Vagina (tissue), 2 donors: ENCODE measurements at regions of chr4 and their contacts with region 1.

Region 1: GRCh38 chr4:157035471-157035870 is 40.5 kb upstream of the GLRB start:
- DNase-seq: no peak
- H3K4me3 ChIP-seq: no peak overlapping the region
- H3K27ac ChIP-seq: no peak overlapping the region
- H3K4me1 ChIP-seq: no peaks in the 10 kb centered on the region
- H3K27me3 ChIP-seq: no peaks in the 10 kb centered on the region
- CTCF ChIP-seq: no peak
- POLR2A ChIP-seq: no peak

Region 2: GRCh38 chr4:157405070-157405469 is 369.6 kb after region 1 on chr4:
- intact Hi-C with region 1: loop called (anchors 5 kb)
- DNase-seq: no peak
- H3K4me3 ChIP-seq: no peak overlapping the region
- H3K27ac ChIP-seq: no peak overlapping the region
- H3K4me1 ChIP-seq: no peaks in the 10 kb centered on the region
- H3K27me3 ChIP-seq: no peaks in the 10 kb centered on the region
- CTCF ChIP-seq: no peak
- POLR2A ChIP-seq: no peak